ENCODE measurements at regions of chr6 and their contacts with region 1.

Region 1: GRCh38 chr6:43150051-43150751 is 20.9 kb upstream of the SRF start:
- DNase-seq: no peak
- H3K4me3 ChIP-seq: no peak overlapping the region
- H3K27ac ChIP-seq: no peak overlapping the region
- H3K4me1 ChIP-seq: no peaks in the 10 kb centered on the region
- H3K27me3 ChIP-seq: no peaks in the 10 kb centered on the region
- CTCF ChIP-seq: no peak
- EP300 ChIP-seq: no peak
- POLR2A ChIP-seq: no peak
- RAD21 ChIP-seq: no peak

Region 2: DNA sequence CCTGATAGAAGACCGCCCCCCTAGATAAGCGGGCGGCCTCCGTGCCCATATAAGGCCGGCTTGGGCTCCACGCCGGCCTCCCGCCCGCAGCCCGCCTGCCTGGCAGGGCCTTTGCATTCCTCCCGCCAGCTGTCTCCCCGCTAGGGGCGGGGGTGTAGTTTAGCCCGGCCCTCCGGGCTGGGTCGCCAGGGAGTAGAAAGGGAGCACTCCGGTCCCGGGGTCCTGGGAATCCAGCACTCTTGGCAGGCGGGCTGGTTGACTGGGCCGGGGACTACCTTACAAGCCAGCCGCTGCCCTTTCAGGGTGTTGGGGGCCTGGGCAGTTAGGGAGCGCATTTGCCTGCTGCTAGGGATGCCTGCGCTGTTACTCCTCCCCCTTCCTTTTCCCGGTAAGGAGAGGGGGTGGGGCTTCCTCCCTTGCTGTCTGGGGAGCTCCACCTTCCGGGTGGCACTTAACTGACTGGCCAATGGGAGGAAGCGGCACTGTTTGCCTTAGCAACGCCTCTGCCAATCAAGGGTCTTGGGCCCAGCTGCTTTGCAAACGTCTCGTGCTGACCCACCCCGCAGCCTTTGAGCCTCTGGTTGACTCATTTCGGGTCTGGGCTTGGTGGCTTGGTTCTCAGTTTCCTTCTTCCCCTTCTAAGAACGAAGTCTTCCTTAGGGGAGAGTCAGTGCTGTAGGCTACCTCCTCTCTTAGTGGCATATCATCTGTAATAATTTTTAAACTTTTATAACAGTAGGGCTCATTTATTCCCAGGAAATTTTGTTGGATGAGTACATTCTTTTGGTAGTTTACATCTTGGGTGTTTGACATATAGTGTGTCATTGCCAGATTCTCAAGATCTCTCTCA is 24.3 kb after region 1 on chr6:
- CTCF ChIA-PET with region 1: no interaction called
- POLR2A ChIA-PET with region 1: interaction called, 12 read pairs
- DNase-seq: peak; percentile 90 to 95
- H3K4me3 ChIP-seq: peak overlapping the region; percentile 27 to 86 (median 38)
- H3K27ac ChIP-seq: peak overlapping the region; percentile 77; the same call in 1 of the 2 replicates
- H3K4me1 ChIP-seq: peaks cover 9 to 17% (median 11%) of the 10 kb centered on the region in 4 experiments
- H3K27me3 ChIP-seq: peaks cover 0 to 6% (median 2%) of the 10 kb centered on the region in 4 experiments; a peak in 3 of 7 replicates
- CTCF ChIP-seq: no peak; a peak in 1 of 4 replicates
- EP300 ChIP-seq: no peak; a peak in 1 of 3 replicates
- POLR2A ChIP-seq: peak in 1 of 2 experiments; percentile 59; a peak in 2 of 3 replicates
- RAD21 ChIP-seq: peak in 1 of 2 experiments; percentile 11; a peak in 1 of 4 replicates

Region 3: GRCh38 chr6:43203029-43203717 is 53.0 kb after region 1 on chr6:
- CTCF ChIA-PET with region 1: no interaction called
- POLR2A ChIA-PET with region 1: no interaction called
- DNase-seq: no peak
- H3K4me3 ChIP-seq: no peak overlapping the region
- H3K27ac ChIP-seq: no peak overlapping the region
- H3K4me1 ChIP-seq: no peaks in the 10 kb centered on the region
- H3K27me3 ChIP-seq: no peaks in the 10 kb centered on the region
- CTCF ChIP-seq: no peak
- EP300 ChIP-seq: no peak
- POLR2A ChIP-seq: no peak
- RAD21 ChIP-seq: no peak